ENCODE measurements at regions of chr9 and their contacts with region 1.

Region 1: GRCh38 chr9:73114958-73115357 is 36.7 kb upstream of the ANXA1 start:
- DNase-seq: no peak
- H3K4me3 ChIP-seq: no peak overlapping the region
- H3K27ac ChIP-seq: no peak overlapping the region
- H3K4me1 ChIP-seq: peaks cover 4 to 6% of the 10 kb centered on the region in 2 donors
- H3K27me3 ChIP-seq: no peaks in the 10 kb centered on the region
- CTCF ChIP-seq: no peak
- POLR2A ChIP-seq: no peak

Region 2: GRCh38 chr9:73173557-73174329 is 58.8 kb after region 1 on chr9:
- intact Hi-C with region 1: loop called (anchors 5 kb)
- DNase-seq: no peak
- H3K4me3 ChIP-seq: no peak overlapping the region
- H3K27ac ChIP-seq: no peak overlapping the region
- H3K4me1 ChIP-seq: no peaks in the 10 kb centered on the region
- H3K27me3 ChIP-seq: no peaks in the 10 kb centered on the region
- CTCF ChIP-seq: no peak
- POLR2A ChIP-seq: no peak